ENCODE measurements at regions of chr14 and their contacts with region 1.

Region 1: GRCh38 chr14:31456841-31457664 is at the start of gene DTD2:
- DNase-seq: peak; percentile 99
- ATAC-seq: peak; percentile 99
- H3K4me3 ChIP-seq: peak within 1 kb of the TSS; percentile 93
- H3K27ac ChIP-seq: peak within 1 kb of the TSS; percentile 74
- H3K4me1 ChIP-seq: peaks cover 20% of the 10 kb centered on the region
- H3K27me3 ChIP-seq: no peaks in the 10 kb centered on the region
- CTCF ChIP-seq: no peak; the same call in 1 of the 2 replicates
- total RNA-seq, gene DTD2: 35.9 and 36.8 TPM in 2 replicates

Region 2: GRCh38 chr14:31283153-31283552 is 173.9 kb before region 1 on chr14:
- CTCF ChIA-PET with region 1: no interaction called
- POLR2A ChIA-PET with region 1: no interaction called
- intact Hi-C with region 1: no loop called
- DNase-seq: no peak
- ATAC-seq: no peak
- H3K4me3 ChIP-seq: no peak overlapping the region
- H3K27ac ChIP-seq: no peak overlapping the region
- H3K4me1 ChIP-seq: no peaks in the 10 kb centered on the region
- H3K27me3 ChIP-seq: no peaks in the 10 kb centered on the region
- CTCF ChIP-seq: no peak

Region 3: DNA sequence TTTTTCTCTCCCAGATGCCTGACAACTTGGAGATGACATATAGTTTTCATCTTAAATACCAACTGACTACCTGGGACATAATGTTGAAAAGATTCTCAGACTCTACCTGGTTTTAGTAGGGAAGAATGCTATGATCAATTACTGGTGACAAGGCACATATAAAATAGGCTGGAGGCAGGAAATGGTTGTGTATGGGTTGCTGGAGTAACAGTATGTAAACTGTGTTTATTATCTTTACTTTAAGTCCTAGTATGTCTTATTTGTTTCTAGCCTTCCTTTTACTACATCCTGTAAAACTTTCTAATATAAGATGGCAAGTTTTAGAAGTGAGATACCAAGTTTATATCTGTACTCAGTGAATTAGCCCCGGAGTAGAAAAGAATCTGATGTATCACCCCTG is 202.2 kb after region 1 on chr14:
- CTCF ChIA-PET with region 1: no interaction called
- POLR2A ChIA-PET with region 1: no interaction called
- intact Hi-C with region 1: loop called (anchors 5 kb)
- DNase-seq: no peak
- ATAC-seq: peak; percentile 78
- H3K4me3 ChIP-seq: no peak overlapping the region
- H3K27ac ChIP-seq: no peak overlapping the region
- H3K4me1 ChIP-seq: peaks cover 11% of the 10 kb centered on the region
- H3K27me3 ChIP-seq: no peaks in the 10 kb centered on the region
- CTCF ChIP-seq: no peak

Region 4: DNA sequence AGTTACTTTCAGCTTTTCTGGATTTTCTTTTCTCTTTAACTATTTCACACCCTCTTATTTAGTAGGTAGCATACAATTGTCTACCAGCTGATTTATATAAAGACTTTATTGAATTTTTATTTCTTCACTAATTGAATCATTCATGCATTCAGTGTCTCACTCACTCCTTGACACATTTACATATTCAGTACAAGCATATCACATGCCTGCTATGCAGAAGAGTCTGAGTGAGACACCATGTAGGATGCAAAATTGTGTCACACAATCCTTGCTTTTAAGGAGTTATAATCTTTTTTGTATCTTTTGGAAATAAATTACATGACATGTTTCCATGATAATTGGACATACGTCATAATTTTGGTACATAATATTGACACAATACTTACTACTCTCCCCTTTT is 955.0 kb after region 1 on chr14:
- CTCF ChIA-PET with region 1: no interaction called
- POLR2A ChIA-PET with region 1: interaction called, 14 read pairs
- intact Hi-C with region 1: no loop called
- DNase-seq: no peak
- ATAC-seq: no peak
- H3K4me3 ChIP-seq: no peak overlapping the region
- H3K27ac ChIP-seq: no peak overlapping the region
- H3K4me1 ChIP-seq: peaks cover 21% of the 10 kb centered on the region
- H3K27me3 ChIP-seq: no peaks in the 10 kb centered on the region
- CTCF ChIP-seq: no peak

Measured in PC-3 (cell line).